ENCODE measurements at regions of chr10 and their contacts with region 1.

Region 1: GRCh38 chr10:80196270-80196949 is 8.9 kb downstream of the ANXA11 start:
- DNase-seq: peak; percentile 100
- ATAC-seq: peak; percentile 97
- H3K4me3 ChIP-seq: peak overlapping the region; percentile 21
- H3K27ac ChIP-seq: peak overlapping the region; percentile 74
- H3K4me1 ChIP-seq: peaks cover 69% of the 10 kb centered on the region
- H3K27me3 ChIP-seq: no peaks in the 10 kb centered on the region
- CTCF ChIP-seq: no peak

Region 2: DNA sequence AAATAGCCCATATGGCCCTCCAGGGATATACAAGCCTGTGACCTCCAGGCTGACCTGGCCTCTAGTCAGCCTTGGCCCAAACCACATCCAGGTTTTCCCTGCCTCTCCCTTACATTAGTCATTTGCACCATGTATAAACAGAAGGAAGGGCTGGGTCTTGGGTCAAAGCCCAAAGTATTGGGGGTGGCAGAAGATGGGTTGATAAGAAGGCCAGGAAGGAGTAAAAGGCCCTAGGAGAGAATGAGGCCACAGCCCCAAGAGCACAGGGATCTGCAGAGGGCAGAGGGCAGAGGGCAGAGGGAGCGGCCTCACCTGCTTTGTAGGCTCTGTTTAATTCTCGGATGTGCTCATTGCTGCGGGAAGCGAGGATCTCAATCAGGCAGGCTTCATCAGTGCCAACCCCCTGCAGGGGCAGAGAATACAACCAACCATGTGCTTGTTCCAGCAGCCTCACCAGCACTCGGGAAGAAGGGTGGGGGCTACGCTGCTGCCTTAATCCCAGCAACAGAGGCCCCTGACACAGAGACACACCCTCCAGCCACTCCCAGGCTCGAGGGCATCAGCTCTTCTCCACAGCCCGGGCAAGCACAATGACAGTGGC is 32.6 kb before region 1 on chr10:
- CTCF ChIA-PET with region 1: interaction called, 4 read pairs
- POLR2A ChIA-PET with region 1: interaction called, 4 read pairs
- intact Hi-C with region 1: loop called (anchors 1 kb)
- DNase-seq: peak; percentile 100
- ATAC-seq: peak; percentile 71
- H3K4me3 ChIP-seq: peak overlapping the region; percentile 23
- H3K27ac ChIP-seq: peak overlapping the region; percentile 78
- H3K4me1 ChIP-seq: peaks cover 55% of the 10 kb centered on the region
- H3K27me3 ChIP-seq: no peaks in the 10 kb centered on the region
- CTCF ChIP-seq: no peak

Measured in PC-3 (cell line).